A549 (cell line): ENCODE measurements at regions of chr7 and their contacts with region 1.

Region 1: GRCh38 chr7:102169651-102170392 is 116.8 kb upstream of the SH2B2 start:
- DNase-seq: no peak
- ATAC-seq: no peak; a peak in 1 of 6 replicates
- H3K4me3 ChIP-seq: no peak overlapping the region
- H3K27ac ChIP-seq: peak overlapping the region in 1 of 2 experiments; percentile 49; a peak in 3 of 6 replicates
- H3K4me1 ChIP-seq: peaks cover 11% of the 10 kb centered on the region
- CTCF ChIP-seq: no peak
- EP300 ChIP-seq: no peak
- POLR2A ChIP-seq: no peak
- RAD21 ChIP-seq: no peak

Region 2: DNA sequence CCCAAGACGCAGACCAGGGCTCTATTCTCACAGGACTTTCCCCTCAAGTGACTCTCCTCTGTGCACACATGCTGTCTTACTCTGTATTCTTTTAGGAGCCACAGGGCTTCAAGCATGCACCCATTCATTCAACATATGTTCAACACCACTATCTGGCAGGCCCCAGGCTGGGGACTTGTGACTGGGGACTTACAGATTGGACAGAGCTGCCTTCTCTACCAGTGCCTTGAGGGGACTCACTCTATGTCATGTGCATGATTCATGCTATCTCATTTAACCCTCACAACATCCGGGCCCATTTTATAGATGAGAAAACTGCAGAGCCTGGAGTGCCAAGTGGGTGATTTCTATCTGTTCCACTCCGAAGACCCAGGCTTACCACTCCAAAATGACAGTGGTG is 575.0 kb before region 1 on chr7:
- CTCF ChIA-PET with region 1: no interaction called
- POLR2A ChIA-PET with region 1: no interaction called
- DNase-seq: no peak
- ATAC-seq: peak in 1 of 2 experiments; percentile 53; a peak in 1 of 6 replicates
- H3K4me3 ChIP-seq: no peak overlapping the region
- H3K27ac ChIP-seq: no peak overlapping the region
- H3K4me1 ChIP-seq: no peaks in the 10 kb centered on the region
- CTCF ChIP-seq: no peak
- EP300 ChIP-seq: no peak
- POLR2A ChIP-seq: no peak
- RAD21 ChIP-seq: no peak

Region 3: GRCh38 chr7:102063690-102064131 is 106.1 kb before region 1 on chr7:
- CTCF ChIA-PET with region 1: no interaction called
- POLR2A ChIA-PET with region 1: interaction called, 15 read pairs
- DNase-seq: peak; percentile 60 to 86
- ATAC-seq: peak; percentile 77 to 88
- H3K4me3 ChIP-seq: no peak overlapping the region
- H3K27ac ChIP-seq: peak overlapping the region; percentile 72 to 81
- H3K4me1 ChIP-seq: peaks cover 38% of the 10 kb centered on the region
- CTCF ChIP-seq: no peak
- EP300 ChIP-seq: no peak; a peak in 1 of 5 replicates
- POLR2A ChIP-seq: no peak
- RAD21 ChIP-seq: no peak

Region 4: GRCh38 chr7:102189756-102190155 is 19.9 kb after region 1 on chr7:
- CTCF ChIA-PET with region 1: no interaction called
- POLR2A ChIA-PET with region 1: no interaction called
- DNase-seq: no peak
- ATAC-seq: no peak
- H3K4me3 ChIP-seq: no peak overlapping the region
- H3K27ac ChIP-seq: no peak overlapping the region
- H3K4me1 ChIP-seq: no peaks in the 10 kb centered on the region
- CTCF ChIP-seq: no peak
- EP300 ChIP-seq: no peak
- POLR2A ChIP-seq: no peak
- RAD21 ChIP-seq: no peak